ENCODE measurements at regions of chr17 and their contacts with region 1.

Region 1: GRCh38 chr17:64661976-64662773 is at the start of gene SMURF2:
- DNase-seq: peak; percentile 71
- H3K4me3 Mint-ChIP-seq: peak within 1 kb of the TSS; percentile 94
- H3K27ac Mint-ChIP-seq: peak within 1 kb of the TSS; percentile 92
- H3K4me1 Mint-ChIP-seq: peaks cover 20% of the 10 kb centered on the region
- H3K27me3 Mint-ChIP-seq: no peaks in the 10 kb centered on the region
- CTCF ChIP-seq: no peak
- total RNA-seq, gene SMURF2: 15.0 and 18.8 TPM in 2 replicates

Region 2: DNA sequence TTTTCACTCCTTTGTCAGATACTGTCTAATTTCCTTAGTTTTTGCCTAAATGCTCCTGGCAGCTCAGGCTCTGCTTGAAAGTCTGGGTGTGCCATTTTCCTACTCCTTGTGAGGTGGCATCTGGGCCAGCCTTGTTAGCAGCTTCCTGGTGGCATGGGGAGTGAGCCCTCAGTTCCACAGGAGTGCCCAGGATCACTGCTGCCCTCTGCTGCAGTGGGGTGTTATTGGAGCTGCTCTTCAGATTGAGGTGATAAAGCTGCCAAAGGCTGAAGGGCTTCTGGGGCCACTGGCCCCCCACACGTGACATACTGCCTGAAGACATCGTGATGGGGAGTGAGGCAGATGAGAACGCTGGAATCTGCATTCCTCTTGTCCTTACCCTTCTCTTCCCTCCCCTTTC is 128.0 kb before region 1 on chr17:
- CTCF ChIA-PET with region 1: no interaction called
- intact Hi-C with region 1: no loop called
- DNase-seq: peak; percentile 11
- H3K4me3 Mint-ChIP-seq: no peak overlapping the region
- H3K27ac Mint-ChIP-seq: no peak overlapping the region
- H3K4me1 Mint-ChIP-seq: no peaks in the 10 kb centered on the region
- H3K27me3 Mint-ChIP-seq: no peaks in the 10 kb centered on the region
- CTCF ChIP-seq: no peak

Region 3: GRCh38 chr17:64635647-64636307 is 26.4 kb before region 1 on chr17:
- CTCF ChIA-PET with region 1: no interaction called
- intact Hi-C with region 1: no loop called
- DNase-seq: no peak
- H3K4me3 Mint-ChIP-seq: no peak overlapping the region
- H3K27ac Mint-ChIP-seq: no peak overlapping the region
- H3K4me1 Mint-ChIP-seq: peaks cover 12% of the 10 kb centered on the region
- H3K27me3 Mint-ChIP-seq: no peaks in the 10 kb centered on the region
- CTCF ChIP-seq: no peak

Region 4: GRCh38 chr17:64707019-64707591 is 44.9 kb after region 1 on chr17:
- CTCF ChIA-PET with region 1: no interaction called
- intact Hi-C with region 1: loop called (anchors 5 kb)
- DNase-seq: peak; percentile 78
- H3K4me3 Mint-ChIP-seq: peak overlapping the region; percentile 19
- H3K27ac Mint-ChIP-seq: peak overlapping the region; percentile 82
- H3K4me1 Mint-ChIP-seq: peaks cover 34% of the 10 kb centered on the region
- H3K27me3 Mint-ChIP-seq: no peaks in the 10 kb centered on the region
- CTCF ChIP-seq: no peak

Region 5: DNA sequence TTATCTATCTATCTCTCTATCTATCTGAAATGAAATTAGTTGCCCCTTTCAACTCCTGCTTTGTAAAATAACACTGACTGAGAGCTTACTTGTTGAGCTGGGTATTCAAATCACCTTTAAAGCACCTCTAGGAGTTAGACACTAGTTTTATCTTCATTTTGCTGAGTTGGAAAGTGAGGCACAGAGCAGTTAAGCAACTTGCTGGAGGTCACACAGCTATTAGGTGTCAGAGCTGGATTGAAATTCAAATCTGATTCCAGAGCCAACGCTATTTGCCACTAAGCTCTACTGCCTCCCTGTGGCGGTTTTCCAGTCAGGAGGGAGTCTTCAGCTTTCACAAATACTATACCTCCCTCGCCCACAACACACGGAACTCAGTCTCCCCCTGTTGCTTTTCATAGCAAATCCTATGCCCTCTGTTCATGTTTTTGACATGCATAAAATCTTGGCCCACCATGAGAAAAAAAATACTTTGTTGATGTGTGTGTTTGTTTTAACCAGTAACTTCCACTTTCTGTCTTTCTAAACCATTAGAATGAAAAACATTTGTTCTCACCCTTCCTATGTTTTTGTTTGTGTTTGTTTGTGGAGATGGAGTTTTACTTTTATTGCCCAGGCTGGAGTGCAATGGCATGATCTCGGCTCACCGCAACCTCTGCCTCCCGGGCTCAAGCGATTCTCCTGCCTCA is 74.8 kb after region 1 on chr17:
- CTCF ChIA-PET with region 1: no interaction called
- intact Hi-C with region 1: loop called (anchors 10 kb)
- DNase-seq: peak; percentile 58
- H3K4me3 Mint-ChIP-seq: no peak overlapping the region
- H3K27ac Mint-ChIP-seq: no peak overlapping the region
- H3K4me1 Mint-ChIP-seq: peaks cover 8% of the 10 kb centered on the region
- H3K27me3 Mint-ChIP-seq: no peaks in the 10 kb centered on the region
- CTCF ChIP-seq: peak; percentile 35

Measured in Calu3 (cell line).